RWPE1 (cell line): ENCODE measurements at regions of chr5 and their contacts with region 1.

Region 1: DNA sequence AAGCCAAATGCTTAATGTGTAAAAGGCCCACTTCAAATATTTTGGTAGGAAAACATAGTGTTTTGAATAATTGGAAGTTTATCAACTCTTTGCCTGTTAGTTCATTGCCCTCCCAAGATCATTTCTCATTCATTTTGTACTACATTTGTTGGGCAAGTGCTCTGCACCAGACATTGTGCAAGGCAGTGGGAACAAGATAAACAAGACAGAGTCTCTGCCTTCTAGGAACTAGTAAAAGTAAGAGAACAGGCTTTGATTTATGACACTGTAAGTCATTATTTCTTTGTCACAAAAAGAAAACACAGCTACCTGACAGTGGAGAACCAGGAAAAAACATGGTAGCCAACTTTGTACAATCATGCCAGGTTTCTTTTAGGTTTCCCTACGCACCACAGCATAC is 63.7 kb upstream of the PAM start:
- DNase-seq: no peak
- H3K27ac ChIP-seq: no peak overlapping the region
- CTCF ChIP-seq: no peak

Region 2: DNA sequence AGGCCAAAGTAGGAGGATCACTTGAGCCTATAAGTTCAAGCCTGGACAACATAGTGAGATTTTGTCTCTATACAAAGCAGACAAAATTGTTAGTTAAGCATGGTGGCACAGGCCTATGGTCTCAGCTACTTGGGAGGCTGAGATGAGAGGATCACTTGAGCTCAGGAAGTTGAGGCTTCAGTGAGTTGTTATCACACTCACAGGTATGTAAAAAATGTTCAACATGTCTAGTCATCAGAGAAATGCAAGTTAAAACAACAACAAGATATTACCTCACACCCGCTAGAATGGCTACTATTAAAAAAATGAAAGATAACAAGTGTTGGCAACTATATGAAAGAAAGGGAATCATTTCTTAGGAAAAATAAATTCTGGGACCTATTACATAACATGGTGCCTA is 1446.8 kb before region 1 on chr5:
- CTCF ChIA-PET with region 1: interaction called, 10 read pairs
- POLR2A ChIA-PET with region 1: no interaction called
- DNase-seq: no peak
- H3K27ac ChIP-seq: no peak overlapping the region
- CTCF ChIP-seq: no peak